ENCODE measurements at regions of chr17 and their contacts with region 1.

Region 1: GRCh38 chr17:1724506-1725362 is at the start of gene WDR81:
- DNase-seq: peak; percentile 99
- H3K4me3 ChIP-seq: peak within 1 kb of the TSS; percentile 69 to 99 (median 91)
- H3K27ac ChIP-seq: peak within 1 kb of the TSS; percentile 82 to 96 (median 88)
- H3K4me1 ChIP-seq: peaks cover 45 to 96% (median 85%) of the 10 kb centered on the region in 6 donors
- H3K27me3 ChIP-seq: no peaks in the 10 kb centered on the region
- CTCF ChIP-seq: peak in 2 of 11 experiments; percentile 24 to 26
- POLR2A ChIP-seq: no peak
- total RNA-seq, gene WDR81: 38.2 to 74.7 (median 54.7) TPM

Region 2: GRCh38 chr17:1562176-1562643 is 162.5 kb before region 1 on chr17:
- intact Hi-C with region 1: no loop called
- DNase-seq: peak; percentile 93
- H3K4me3 ChIP-seq: peak overlapping the region; percentile 66 to 97 (median 77)
- H3K27ac ChIP-seq: peak overlapping the region; percentile 66 to 96 (median 86)
- H3K4me1 ChIP-seq: peaks cover 17 to 79% (median 62%) of the 10 kb centered on the region in 6 donors
- H3K27me3 ChIP-seq: no peaks in the 10 kb centered on the region
- CTCF ChIP-seq: peak in 2 of 11 experiments; percentile 3 to 21
- POLR2A ChIP-seq: no peak

Region 3: DNA sequence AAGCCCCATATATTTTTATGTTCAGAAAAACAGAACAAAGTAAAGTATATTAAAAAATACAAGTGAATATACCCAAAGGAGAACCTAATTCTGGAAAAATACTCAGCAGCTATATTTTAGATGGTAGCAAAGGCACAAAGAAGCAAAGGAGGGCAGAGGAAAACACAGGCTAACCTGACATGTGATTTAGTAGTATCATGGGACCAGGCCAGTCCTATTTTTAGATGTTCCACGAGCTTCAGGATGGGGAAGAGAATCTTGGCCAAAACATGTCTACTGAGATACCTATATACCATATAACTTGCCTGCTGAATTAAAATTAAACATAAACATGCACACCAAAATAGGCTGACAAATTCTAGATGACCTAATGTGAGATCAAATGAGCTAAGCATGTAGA is 72.1 kb after region 1 on chr17:
- intact Hi-C with region 1: no loop called
- DNase-seq: no peak
- H3K4me3 ChIP-seq: no peak overlapping the region
- H3K27ac ChIP-seq: peak overlapping the region in 1 of 8 donors; percentile 11
- H3K4me1 ChIP-seq: no peaks in the 10 kb centered on the region
- H3K27me3 ChIP-seq: no peaks in the 10 kb centered on the region
- CTCF ChIP-seq: no peak
- POLR2A ChIP-seq: no peak

Region 4: DNA sequence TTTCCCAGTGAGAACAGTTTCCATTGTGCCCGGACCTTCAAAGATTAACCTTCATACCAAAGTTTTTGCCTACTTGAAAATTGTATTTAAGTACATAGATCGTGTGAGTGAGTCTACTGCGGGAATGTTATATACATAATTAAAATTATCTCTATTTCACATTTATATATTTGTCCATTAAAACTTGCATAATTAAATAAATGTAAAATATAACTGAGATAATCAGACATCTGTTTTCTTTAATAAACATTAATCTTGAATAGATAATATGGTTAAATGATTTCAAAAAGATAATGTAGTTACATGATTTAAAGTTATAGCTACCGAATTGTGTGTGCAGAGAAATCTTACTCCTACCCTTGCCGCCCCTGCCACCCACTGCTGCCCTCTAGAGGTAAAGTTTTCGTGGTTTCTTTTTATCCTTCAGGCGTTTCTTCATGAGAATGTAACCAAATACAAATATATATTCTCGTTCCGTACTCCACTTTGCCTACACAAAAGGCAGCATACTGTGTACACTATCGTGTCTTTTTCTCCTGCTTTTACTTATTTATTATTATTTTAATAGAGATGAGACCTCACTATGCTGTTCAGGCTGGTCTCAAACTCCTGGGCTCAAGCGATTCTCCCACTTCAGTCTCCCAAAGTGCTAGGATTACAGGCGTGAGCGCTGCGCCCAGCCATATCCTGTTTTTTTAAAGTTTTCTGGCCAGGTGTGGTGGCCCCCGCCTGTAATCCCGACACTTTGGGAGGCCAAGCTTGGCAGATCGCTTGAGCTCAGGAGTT is 140.7 kb after region 1 on chr17:
- intact Hi-C with region 1: loop called (anchors 5 kb)
- DNase-seq: peak; percentile 78
- H3K4me3 ChIP-seq: no peak overlapping the region
- H3K27ac ChIP-seq: no peak overlapping the region
- H3K4me1 ChIP-seq: peaks cover 0 to 19% (median 0%) of the 10 kb centered on the region in 6 donors
- H3K27me3 ChIP-seq: no peaks in the 10 kb centered on the region
- CTCF ChIP-seq: peak; percentile 25 to 72 (median 57)
- POLR2A ChIP-seq: no peak